HEK293 (cell line): ENCODE measurements at regions of chr18 and their contacts with region 1.

Region 1: GRCh38 chr18:50819728-50820378 is at the start of gene MRO:
- H3K4me3 ChIP-seq: peak within 1 kb of the TSS; percentile 4
- H3K27ac ChIP-seq: no peak within 1 kb of the TSS
- H3K4me1 ChIP-seq: peaks cover 14% of the 10 kb centered on the region
- CTCF ChIP-seq: peak; percentile 99

Region 2: DNA sequence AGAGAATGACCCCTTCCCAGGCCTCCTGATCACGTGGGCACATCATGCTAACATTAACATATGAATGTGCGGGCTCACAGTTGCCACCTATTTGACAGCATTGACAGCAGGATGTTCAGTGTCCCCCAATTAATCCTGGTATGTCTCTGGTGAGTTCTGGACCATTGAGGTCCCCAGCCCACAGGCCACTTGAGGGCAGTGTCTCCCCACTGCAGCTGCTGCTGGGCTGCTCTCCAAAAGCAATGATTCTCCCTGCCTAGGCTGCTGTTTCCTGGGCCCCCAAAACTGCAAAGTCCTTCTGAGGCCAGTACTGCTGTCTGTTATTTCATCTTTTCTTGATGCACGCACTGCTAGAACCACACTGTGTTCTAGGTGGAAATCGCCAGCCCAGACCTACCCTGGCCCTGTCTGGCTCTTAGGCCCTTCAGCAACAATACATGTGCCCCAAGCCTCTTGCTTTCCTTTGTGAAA is 312.7 kb before region 1 on chr18:
- CTCF ChIA-PET with region 1: interaction called, 10 read pairs
- POLR2A ChIA-PET with region 1: no interaction called
- H3K4me3 ChIP-seq: no peak overlapping the region
- H3K27ac ChIP-seq: no peak overlapping the region
- H3K4me1 ChIP-seq: no peaks in the 10 kb centered on the region
- CTCF ChIP-seq: peak; percentile 95

Region 3: DNA sequence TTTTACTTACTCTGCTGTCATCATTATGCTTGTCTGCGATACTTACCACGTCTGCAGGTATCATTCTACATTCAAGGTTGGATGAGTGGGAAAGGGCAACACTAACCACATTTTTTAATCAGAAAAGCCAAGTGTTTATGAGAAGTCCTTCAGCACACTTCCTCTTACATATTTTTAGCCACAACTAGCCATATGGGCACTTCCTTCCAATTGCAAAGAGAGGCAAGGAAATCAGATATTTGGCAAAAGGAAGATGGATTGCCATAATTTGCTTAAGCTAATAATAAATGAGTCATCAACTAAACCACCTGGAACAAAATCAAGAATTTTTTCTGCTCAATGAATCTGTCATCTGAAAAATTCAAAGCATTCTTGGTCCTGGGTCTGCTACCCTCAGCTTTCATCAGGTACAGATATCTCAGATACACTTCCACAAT is 16.7 kb after region 1 on chr18:
- CTCF ChIA-PET with region 1: interaction called, 15 read pairs
- POLR2A ChIA-PET with region 1: interaction called, 3 read pairs
- H3K4me3 ChIP-seq: no peak overlapping the region
- H3K27ac ChIP-seq: no peak overlapping the region
- H3K4me1 ChIP-seq: no peaks in the 10 kb centered on the region
- CTCF ChIP-seq: no peak

Region 4: DNA sequence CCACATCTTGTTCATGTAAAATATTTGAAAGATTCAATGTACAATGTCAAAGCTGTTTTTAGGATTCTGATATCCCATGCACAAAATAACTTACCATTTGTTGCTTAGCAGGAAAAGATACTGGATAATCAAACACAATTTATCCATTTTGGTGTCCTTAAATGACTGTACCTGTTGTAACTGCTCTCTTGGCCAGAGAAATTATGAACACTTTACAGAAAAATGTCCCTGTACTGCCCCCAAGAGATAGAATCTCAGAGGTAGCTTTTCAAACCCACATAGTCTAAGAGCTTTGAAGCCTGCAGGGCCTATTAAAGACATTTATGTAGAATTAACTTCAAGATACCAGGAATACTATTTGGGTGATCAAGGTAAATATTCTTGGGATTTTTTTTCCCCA is 46.9 kb after region 1 on chr18:
- CTCF ChIA-PET with region 1: interaction called, 13 read pairs
- POLR2A ChIA-PET with region 1: no interaction called
- H3K4me3 ChIP-seq: no peak overlapping the region
- H3K27ac ChIP-seq: no peak overlapping the region
- H3K4me1 ChIP-seq: peaks cover 7% of the 10 kb centered on the region
- CTCF ChIP-seq: no peak

Region 5: DNA sequence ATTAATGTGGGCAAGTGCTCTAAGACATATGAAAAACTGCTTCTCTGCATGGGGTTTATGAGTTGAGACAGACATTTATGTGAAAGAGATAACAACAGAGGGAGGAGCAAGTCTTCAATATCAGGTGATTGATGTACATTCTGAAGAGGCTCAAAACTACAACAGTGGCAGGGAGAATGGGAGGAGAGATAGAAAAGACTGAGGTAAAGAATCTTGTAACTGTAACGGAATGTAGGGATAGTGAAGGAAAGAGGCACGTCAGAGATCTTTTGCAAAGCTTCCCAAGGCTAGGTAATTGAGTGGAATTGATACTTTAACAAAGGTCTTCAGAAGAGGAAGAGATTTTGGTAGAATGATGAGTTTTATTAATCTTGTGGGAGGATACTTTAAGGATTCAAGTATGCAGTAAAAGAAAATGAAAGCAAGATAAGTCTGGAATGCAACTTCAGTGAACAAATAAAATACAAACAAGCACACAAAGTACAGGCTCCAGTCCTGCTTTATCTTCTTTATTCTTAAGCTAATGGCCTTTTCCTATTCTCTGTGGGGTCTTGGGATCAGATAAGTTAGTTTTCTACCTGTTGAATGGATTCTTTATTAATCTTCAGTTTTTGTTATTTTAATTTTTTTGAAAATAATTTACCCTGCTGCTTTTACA is 225.2 kb after region 1 on chr18:
- CTCF ChIA-PET with region 1: interaction called, 38 read pairs
- POLR2A ChIA-PET with region 1: no interaction called
- H3K4me3 ChIP-seq: no peak overlapping the region
- H3K27ac ChIP-seq: 0 out of 2 replicates have a peak overlapping the region, but pooled peaks have one; percentile 30
- H3K4me1 ChIP-seq: peaks cover 29% of the 10 kb centered on the region
- CTCF ChIP-seq: no peak

Region 6: DNA sequence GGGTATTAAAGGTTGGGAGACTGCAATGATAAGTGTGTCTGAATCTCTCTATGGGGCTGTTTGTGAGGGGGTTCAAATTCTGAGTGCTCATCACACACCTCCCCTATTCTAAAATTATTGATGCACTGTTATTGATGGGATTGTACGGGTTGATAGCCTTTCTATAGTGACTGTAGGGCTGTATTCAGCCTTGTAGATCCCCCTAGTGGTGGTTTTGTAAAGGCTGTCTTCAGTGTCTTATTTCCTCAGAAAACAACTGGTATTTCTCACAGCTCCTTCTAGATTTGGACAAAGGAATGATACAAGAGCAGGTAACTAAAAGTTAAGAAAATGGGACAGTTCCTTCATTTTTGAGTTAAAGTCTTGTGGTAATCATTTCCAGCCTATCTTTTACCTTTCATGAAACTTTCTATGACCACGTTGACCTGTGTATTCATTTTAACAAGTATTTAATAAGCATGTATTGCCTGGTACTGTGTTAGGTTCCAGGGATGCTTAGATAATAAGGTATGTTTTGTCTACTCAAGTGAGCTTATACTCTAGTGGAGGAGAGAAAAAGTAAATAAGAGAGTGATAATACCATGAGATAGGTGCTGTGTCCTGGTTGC is 231.4 kb after region 1 on chr18:
- CTCF ChIA-PET with region 1: interaction called, 38 read pairs
- POLR2A ChIA-PET with region 1: interaction called, 3 read pairs
- H3K4me3 ChIP-seq: no peak overlapping the region
- H3K27ac ChIP-seq: no peak overlapping the region
- H3K4me1 ChIP-seq: no peaks in the 10 kb centered on the region
- CTCF ChIP-seq: peak; percentile 39; the same call in 1 of the 2 replicates

Region 7: DNA sequence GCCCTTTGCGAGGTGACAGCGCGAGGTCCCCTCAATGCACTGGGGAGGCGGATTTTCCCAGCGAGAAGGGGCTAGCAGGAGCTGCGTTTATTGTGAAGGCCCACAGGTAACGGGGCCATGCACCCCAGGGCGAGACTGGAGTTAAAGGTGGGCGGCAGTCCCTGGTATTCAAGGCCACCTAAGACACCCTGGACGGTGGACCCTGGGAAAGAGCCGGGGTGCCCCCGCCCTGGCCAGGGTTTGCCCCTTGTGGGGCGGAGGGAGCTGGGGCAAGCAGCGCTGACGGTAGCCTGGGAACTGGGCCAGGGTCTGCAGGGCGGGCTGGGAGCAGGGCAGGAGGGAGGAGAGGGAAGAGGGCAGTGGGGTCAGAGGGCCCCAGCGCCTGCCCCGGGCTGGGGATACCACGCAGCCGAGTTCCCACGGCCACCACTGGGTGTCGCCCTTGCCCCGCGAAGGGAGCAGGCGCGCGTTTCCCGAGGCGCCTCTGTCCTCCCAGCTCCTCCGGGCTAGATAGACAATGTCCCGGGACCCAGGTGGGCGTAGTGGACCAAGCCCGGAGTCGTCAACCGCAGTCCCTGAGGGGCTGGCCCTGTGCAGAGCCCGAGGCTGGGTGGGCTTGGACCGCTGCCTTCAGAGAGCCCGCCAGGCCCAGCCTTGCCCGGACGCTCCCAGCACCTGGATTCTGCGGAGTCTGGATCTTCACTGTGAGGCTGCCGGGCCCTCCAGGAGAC is 290.4 kb after region 1 on chr18:
- CTCF ChIA-PET with region 1: interaction called, 14 read pairs
- POLR2A ChIA-PET with region 1: no interaction called
- H3K4me3 ChIP-seq: no peak overlapping the region
- H3K27ac ChIP-seq: no peak overlapping the region
- H3K4me1 ChIP-seq: no peaks in the 10 kb centered on the region
- CTCF ChIP-seq: peak; percentile 94